Activated CD4-positive, alpha-beta memory T cell treated with anti-CD3 and anti-CD28 coated beads for 36 hours (primary cell): ENCODE measurements at regions of chr15 and their contacts with region 1.

Region 1: GRCh38 chr15:52735231-52736089 is 54.7 kb downstream of the ONECUT1 start:
- DNase-seq: peak; percentile 75
- H3K4me3 Mint-ChIP-seq: no peak overlapping the region
- H3K27ac Mint-ChIP-seq: no peak overlapping the region
- H3K4me1 Mint-ChIP-seq: peaks cover 10% of the 10 kb centered on the region
- H3K27me3 Mint-ChIP-seq: peaks cover 1% of the 10 kb centered on the region

Region 2: DNA sequence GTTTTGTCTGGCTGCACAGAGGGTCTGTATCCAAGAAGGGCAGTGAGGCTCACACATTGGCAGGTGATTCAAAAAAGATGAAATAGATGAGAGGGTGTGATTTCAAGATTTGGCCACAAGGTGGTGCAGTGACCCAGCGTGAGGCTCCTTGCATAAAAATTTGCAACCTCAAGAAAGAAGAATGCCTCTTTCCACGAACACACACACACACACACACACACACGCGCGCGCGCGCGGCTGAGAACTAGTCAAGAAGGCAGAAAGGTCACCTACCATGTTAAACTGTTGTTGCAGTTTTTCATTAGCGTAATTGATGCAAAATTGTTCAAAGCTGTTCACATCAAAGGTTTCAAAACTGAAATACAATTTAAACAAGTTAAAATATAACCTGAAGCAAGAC is 479.1 kb before region 1 on chr15:
- CTCF ChIA-PET with region 1: interaction called, 94 read pairs
- POLR2A ChIA-PET with region 1: no interaction called
- intact Hi-C with region 1: loop called (anchors 1 kb)
- DNase-seq: peak; percentile 84
- H3K4me3 Mint-ChIP-seq: peak overlapping the region; percentile 37
- H3K27ac Mint-ChIP-seq: peak overlapping the region; percentile 56
- H3K4me1 Mint-ChIP-seq: peaks cover 23% of the 10 kb centered on the region
- H3K27me3 Mint-ChIP-seq: no peaks in the 10 kb centered on the region

Region 3: DNA sequence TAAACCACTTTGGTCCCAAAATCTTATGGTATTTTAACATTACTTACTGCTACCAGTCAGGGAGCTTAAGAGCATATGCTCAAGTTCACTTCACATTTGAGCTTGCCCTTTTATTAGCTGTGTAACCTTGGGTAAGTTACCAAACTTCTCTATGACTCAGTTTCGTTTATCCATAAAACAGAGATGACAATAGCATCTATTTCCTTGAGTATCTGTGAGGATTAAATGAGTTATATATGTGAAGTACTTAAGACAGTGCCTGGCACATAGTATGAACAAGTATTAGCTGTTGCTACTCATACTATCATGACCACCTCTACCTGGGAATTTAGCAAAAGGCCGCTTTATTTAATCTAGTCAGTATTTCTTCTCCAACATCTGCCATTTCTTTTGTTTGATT is 62.1 kb before region 1 on chr15:
- CTCF ChIA-PET with region 1: interaction called, 10 read pairs
- POLR2A ChIA-PET with region 1: no interaction called
- intact Hi-C with region 1: loop called (anchors 1 kb)
- DNase-seq: no peak
- H3K4me3 Mint-ChIP-seq: no peak overlapping the region
- H3K27ac Mint-ChIP-seq: peak overlapping the region; percentile 60
- H3K4me1 Mint-ChIP-seq: peaks cover 36% of the 10 kb centered on the region
- H3K27me3 Mint-ChIP-seq: no peaks in the 10 kb centered on the region

Region 4: DNA sequence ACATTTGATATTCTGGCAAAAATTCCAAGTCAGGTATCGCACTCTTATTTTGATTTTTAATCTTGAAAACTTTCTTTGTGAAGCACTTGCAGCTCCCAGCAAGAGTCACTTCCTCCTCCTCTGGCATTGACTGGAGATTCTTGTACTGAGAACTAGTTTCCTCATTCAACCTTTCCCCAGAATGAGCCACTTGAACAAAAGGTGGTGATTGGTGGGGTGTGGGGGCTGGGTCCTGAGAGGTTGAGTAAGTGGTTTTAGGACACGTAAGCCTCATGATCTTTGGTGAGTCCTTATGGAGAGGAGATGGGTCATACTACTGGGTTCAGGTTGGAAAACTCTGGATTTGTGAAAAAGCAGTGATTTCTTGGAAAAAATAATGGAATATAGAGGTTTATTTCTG is 87.0 kb after region 1 on chr15:
- CTCF ChIA-PET with region 1: no interaction called
- POLR2A ChIA-PET with region 1: no interaction called
- intact Hi-C with region 1: no loop called
- DNase-seq: no peak
- H3K4me3 Mint-ChIP-seq: no peak overlapping the region
- H3K27ac Mint-ChIP-seq: no peak overlapping the region
- H3K4me1 Mint-ChIP-seq: no peaks in the 10 kb centered on the region
- H3K27me3 Mint-ChIP-seq: peaks cover 45% of the 10 kb centered on the region